ENCODE measurements at regions of chr2 and their contacts with region 1.

Region 1: GRCh38 chr2:134411828-134412638 is 158.2 kb downstream of the MGAT5 start:
- DNase-seq: peak; percentile 70
- H3K4me3 ChIP-seq: peak overlapping the region in 1 of 2 experiments; percentile 6; a peak in 1 of 4 replicates
- H3K27ac ChIP-seq: peak overlapping the region in 1 of 2 experiments; percentile 97; a peak in 2 of 4 replicates
- H3K4me1 ChIP-seq: peaks cover 33 to 43% of the 10 kb centered on the region in 2 experiments
- H3K27me3 ChIP-seq: no peaks in the 10 kb centered on the region
- CTCF ChIP-seq: peak; percentile 74
- EP300 ChIP-seq: no peak
- RAD21 ChIP-seq: peak; percentile 96

Region 2: DNA sequence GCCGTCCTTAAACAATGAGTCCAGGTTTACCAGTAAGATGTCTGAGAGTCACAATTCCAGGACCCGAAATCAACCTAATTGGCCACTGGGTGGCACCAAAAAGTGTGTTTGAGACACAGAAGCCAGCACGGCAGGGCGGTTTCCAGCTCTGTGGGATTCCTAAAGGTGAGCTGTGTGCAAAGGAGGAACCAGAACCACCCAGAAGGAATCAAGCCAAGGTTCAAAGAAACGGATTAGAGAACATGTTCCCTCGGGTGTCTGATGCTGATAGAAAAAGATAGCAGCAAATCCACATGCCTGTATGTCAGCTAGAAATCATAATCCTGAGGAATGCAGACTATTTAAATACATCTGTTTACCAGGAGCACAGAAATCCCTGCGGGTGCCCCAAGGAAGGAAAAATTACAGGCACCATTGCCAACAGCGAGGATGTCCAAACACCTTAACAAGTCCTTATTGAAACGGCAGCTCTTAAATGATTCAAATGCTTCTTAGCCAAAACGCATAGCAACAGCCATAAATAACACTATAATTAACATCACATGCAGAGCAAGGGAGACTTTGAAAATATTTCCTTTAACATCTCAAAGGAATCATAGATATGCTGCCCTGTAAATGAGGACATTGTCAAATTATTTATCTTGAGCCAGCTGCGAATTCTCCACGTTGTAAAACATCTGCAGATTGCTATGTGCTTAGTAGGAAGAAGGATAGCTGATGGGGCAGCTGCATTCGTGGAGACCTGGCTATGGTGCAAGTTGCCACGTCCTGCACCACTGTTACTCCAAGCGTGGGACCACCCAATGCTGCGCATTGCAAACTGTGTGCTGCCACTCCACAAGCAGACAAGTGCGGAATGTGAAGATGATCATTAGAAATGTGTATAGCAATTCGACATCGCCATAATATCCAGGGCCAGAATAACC is 525.0 kb before region 1 on chr2:
- CTCF ChIA-PET with region 1: interaction called, 49 read pairs
- POLR2A ChIA-PET with region 1: no interaction called
- DNase-seq: peak; percentile 65
- H3K4me3 ChIP-seq: no peak overlapping the region; a peak in 1 of 4 replicates
- H3K27ac ChIP-seq: no peak overlapping the region
- H3K4me1 ChIP-seq: peaks cover 0 to 9% of the 10 kb centered on the region in 2 experiments; a peak in 1 of 4 replicates
- H3K27me3 ChIP-seq: no peaks in the 10 kb centered on the region; the same call in 1 of the 2 replicates
- CTCF ChIP-seq: peak; percentile 69
- EP300 ChIP-seq: no peak
- RAD21 ChIP-seq: peak; percentile 86

Region 3: DNA sequence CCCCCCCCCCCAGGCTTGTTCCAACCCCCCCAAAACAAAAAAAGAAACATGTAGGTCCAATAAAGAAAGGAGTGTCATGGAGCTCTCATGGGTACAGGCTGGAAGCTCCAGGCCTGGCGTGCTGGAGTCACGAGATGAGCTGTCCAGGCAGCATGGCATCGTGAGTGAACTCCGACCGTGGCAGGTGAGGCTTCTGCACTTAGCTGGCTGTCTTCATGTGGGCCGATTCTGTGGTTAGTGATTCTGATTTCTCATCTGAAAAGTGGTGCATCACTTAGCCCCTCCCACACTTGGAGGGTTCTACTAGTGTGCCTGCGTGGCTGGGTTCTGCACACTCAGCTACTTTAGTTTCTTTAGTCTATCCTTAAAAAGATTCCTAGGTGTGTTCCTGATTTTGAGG is 284.5 kb before region 1 on chr2:
- CTCF ChIA-PET with region 1: interaction called, 175 read pairs
- POLR2A ChIA-PET with region 1: no interaction called
- DNase-seq: no peak
- H3K4me3 ChIP-seq: no peak overlapping the region
- H3K27ac ChIP-seq: no peak overlapping the region
- H3K4me1 ChIP-seq: peaks cover 0 to 38% of the 10 kb centered on the region in 2 experiments; a peak in 2 of 4 replicates
- H3K27me3 ChIP-seq: no peaks in the 10 kb centered on the region
- CTCF ChIP-seq: no peak
- EP300 ChIP-seq: no peak
- RAD21 ChIP-seq: no peak

Region 4: GRCh38 chr2:134314681-134315368 is 97.2 kb before region 1 on chr2:
- CTCF ChIA-PET with region 1: interaction called, 10 read pairs
- POLR2A ChIA-PET with region 1: no interaction called
- DNase-seq: no peak
- H3K4me3 ChIP-seq: no peak overlapping the region
- H3K27ac ChIP-seq: peak overlapping the region in 1 of 2 experiments; percentile 81; a peak in 2 of 4 replicates
- H3K4me1 ChIP-seq: peaks cover 0 to 38% of the 10 kb centered on the region in 2 experiments; a peak in 2 of 4 replicates
- H3K27me3 ChIP-seq: no peaks in the 10 kb centered on the region
- CTCF ChIP-seq: no peak
- EP300 ChIP-seq: no peak
- RAD21 ChIP-seq: no peak; the same call in 1 of the 2 replicates

Region 5: GRCh38 chr2:134360745-134361487 is 51.1 kb before region 1 on chr2:
- CTCF ChIA-PET with region 1: interaction called, 20 read pairs
- POLR2A ChIA-PET with region 1: interaction called, 6 read pairs
- DNase-seq: peak; percentile 60
- H3K4me3 ChIP-seq: no peak overlapping the region
- H3K27ac ChIP-seq: peak overlapping the region in 1 of 2 experiments; percentile 97; a peak in 2 of 4 replicates
- H3K4me1 ChIP-seq: peaks cover 0 to 40% of the 10 kb centered on the region in 2 experiments; a peak in 2 of 4 replicates
- H3K27me3 ChIP-seq: no peaks in the 10 kb centered on the region
- CTCF ChIP-seq: no peak
- EP300 ChIP-seq: peak in 1 of 2 experiments; percentile 89; a peak in 2 of 4 replicates
- RAD21 ChIP-seq: peak; percentile 32; the same call in 1 of the 2 replicates

Region 6: DNA sequence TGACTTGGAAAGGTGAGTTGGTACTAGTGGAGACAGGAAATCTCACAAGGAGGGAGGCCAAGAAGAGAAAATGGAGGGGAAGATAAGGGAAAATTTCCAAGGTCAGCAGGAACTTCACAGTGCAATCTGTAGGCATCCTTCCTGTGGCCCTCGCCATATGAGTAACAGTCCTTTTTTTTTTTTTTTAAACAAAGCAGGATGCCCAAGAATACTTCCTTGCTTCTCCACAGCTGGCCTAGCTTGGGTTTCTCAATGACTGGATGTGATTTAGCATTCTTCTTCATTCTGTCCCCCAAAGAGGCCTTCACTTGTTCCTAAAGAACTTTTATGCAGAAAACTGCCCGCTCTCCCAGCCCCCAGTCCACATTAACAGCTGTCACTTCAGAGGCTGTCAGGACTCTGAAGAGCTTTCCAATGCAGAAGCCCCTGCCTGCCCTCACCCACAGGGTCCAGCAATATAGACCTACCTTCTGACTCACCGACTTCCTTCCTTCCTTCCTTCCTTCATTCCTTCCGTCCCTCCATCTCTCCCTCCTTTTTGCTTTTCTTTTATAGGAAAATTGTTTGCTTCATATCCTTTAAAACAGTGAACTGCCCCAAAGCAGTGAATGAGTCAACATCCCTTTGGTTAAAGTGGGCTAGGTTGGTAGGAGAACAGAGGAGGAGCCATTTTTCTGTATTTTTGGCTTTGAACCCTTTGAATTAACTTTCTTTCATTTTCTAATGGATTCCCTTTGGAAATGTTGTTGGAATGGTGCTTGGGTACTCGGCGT is 13.9 kb after region 1 on chr2:
- CTCF ChIA-PET with region 1: interaction called, 20 read pairs
- POLR2A ChIA-PET with region 1: no interaction called
- DNase-seq: no peak
- H3K4me3 ChIP-seq: no peak overlapping the region
- H3K27ac ChIP-seq: no peak overlapping the region
- H3K4me1 ChIP-seq: no peaks in the 10 kb centered on the region; a peak in 1 of 4 replicates
- H3K27me3 ChIP-seq: no peaks in the 10 kb centered on the region
- CTCF ChIP-seq: no peak
- EP300 ChIP-seq: no peak
- RAD21 ChIP-seq: no peak

Measured in SK-N-SH (cell line).